CD4-positive, alpha-beta T cell (primary cell): ENCODE measurements at regions of chr10 and their contacts with region 1.

Region 1: DNA sequence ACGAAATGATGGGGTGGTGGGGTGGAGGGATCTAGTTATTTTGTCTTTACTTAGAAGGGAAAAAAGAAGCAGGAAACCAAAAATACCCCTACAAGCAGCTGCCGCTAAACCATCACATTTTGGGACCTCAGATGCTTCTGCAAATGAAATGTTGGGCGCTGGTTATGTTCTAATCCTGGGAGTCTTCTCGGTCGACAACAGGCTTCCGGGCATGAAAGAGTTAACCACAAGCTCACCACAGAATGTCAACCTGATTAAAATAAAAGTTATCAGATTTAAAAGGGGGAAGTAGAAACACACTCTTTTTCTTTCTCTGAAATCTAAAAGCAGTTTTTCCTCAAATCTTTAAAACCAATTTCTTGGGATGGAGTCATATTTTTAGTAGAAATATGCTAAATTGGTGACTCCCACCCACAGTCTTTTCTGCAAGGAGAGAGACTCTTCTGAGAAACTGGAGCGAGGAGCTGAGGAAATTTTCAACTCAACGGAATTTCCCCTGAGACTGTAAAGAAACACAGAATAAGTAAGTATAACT is 16.8 kb downstream of the IL2RA start:
- DNase-seq: peak in 4 of 14 experiments; percentile 18 to 56 (median 50)
- ATAC-seq: no peak
- H3K4me3 ChIP-seq: peak overlapping the region; percentile 25
- H3K4me3 Mint-ChIP-seq: peak overlapping the region; percentile 74
- H3K27ac ChIP-seq: no peak overlapping the region
- H3K27ac Mint-ChIP-seq: peak overlapping the region; percentile 77
- H3K4me1 ChIP-seq: peaks cover 63% of the 10 kb centered on the region
- H3K4me1 Mint-ChIP-seq: peaks cover 78% of the 10 kb centered on the region
- H3K27me3 ChIP-seq: no peaks in the 10 kb centered on the region
- H3K27me3 Mint-ChIP-seq: no peaks in the 10 kb centered on the region
- CTCF ChIP-seq: no peak

Region 2: GRCh38 chr10:5977471-5978229 is 67.7 kb before region 1 on chr10 and contains the start of gene IL15RA:
- CTCF ChIA-PET with region 1: interaction called, 4 read pairs
- POLR2A ChIA-PET with region 1: interaction called, 5 read pairs
- intact Hi-C with region 1: loop called in 1 of 2 experiments (anchors 5 kb)
- DNase-seq: peak; percentile 61 to 92 (median 76)
- ATAC-seq: peak; percentile 76
- H3K4me3 ChIP-seq: peak within 1 kb of the TSS; percentile 91
- H3K4me3 Mint-ChIP-seq: peak within 1 kb of the TSS; percentile 97
- H3K27ac ChIP-seq: peak within 1 kb of the TSS; percentile 55 to 64
- H3K27ac Mint-ChIP-seq: peak within 1 kb of the TSS; percentile 90
- H3K4me1 ChIP-seq: peaks cover 25% of the 10 kb centered on the region
- H3K4me1 Mint-ChIP-seq: peaks cover 21% of the 10 kb centered on the region
- H3K27me3 ChIP-seq: no peaks in the 10 kb centered on the region
- H3K27me3 Mint-ChIP-seq: no peaks in the 10 kb centered on the region
- CTCF ChIP-seq: no peak
- total RNA-seq, gene IL15RA: 4.4 TPM

Region 3: GRCh38 chr10:6320320-6321010 is 275.1 kb after region 1 on chr10:
- CTCF ChIA-PET with region 1: no interaction called
- POLR2A ChIA-PET with region 1: no interaction called
- intact Hi-C with region 1: no loop called
- DNase-seq: no peak
- ATAC-seq: no peak
- H3K4me3 ChIP-seq: no peak overlapping the region
- H3K4me3 Mint-ChIP-seq: no peak overlapping the region
- H3K27ac ChIP-seq: no peak overlapping the region
- H3K27ac Mint-ChIP-seq: no peak overlapping the region
- H3K4me1 ChIP-seq: no peaks in the 10 kb centered on the region
- H3K4me1 Mint-ChIP-seq: no peaks in the 10 kb centered on the region
- H3K27me3 ChIP-seq: no peaks in the 10 kb centered on the region
- H3K27me3 Mint-ChIP-seq: no peaks in the 10 kb centered on the region
- CTCF ChIP-seq: no peak